Activated CD8-positive, alpha-beta T cell treated with anti-CD3 and anti-CD28 coated beads, Interleukin-2, amount 10 ng/mL, durations not matched to agents 7 days and 5 days (primary cell): ENCODE measurements at regions of chr1 and their contacts with region 1.

Region 1: GRCh38 chr1:53754484-53755312 is 15.7 kb upstream of the GLIS1 start:
- DNase-seq: peak; percentile 54
- ATAC-seq: peak; percentile 63
- H3K4me3 Mint-ChIP-seq: no peak overlapping the region
- H3K27ac Mint-ChIP-seq: no peak overlapping the region
- H3K4me1 Mint-ChIP-seq: no peaks in the 10 kb centered on the region
- H3K27me3 Mint-ChIP-seq: no peaks in the 10 kb centered on the region

Region 2: DNA sequence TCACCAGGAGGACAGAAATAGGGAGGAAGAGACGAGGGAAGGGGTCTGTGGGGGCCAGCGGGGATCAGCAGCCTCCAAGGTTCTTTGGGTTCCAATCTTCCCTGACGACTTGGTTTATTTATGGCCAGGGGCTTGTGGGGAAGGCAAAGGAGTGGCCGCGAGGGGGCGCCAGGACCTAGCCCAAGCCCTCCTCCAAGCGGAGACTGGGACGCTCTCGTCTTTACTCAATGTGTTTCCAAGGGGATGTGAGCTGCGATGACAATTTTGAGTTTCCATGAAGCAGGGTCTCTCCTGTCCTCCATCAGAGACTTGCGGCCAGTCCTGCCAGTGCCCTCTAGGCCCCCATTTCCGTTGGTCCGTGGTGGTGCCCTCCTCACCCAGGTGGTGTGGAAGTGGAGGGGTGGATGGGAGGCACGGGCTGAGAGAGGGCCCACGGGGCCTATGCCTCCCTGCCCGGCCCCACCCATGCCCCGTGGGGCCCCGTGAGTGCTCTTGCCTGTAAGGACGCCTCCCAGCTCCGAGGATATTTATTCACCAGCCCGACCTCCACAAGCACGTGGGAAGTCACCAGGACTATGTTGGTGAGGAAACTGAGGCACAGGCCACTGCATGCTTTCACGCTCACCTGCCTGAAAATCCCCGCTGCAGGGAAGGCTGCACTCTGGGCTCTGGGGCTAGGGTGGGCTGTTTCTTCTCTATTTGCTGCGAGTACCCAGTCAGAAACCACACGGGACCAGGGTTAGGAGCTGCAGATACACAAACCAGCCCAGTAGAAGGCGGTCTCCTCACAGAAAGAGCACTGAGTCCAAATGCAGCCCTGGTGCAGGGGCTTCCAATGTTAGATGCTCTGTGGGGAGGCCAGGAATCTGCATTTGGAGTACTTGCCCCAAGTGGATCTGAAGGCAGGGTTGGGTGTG is 269.0 kb before region 1 on chr1:
- CTCF ChIA-PET with region 1: interaction called, 13 read pairs
- POLR2A ChIA-PET with region 1: no interaction called
- DNase-seq: peak; percentile 79
- ATAC-seq: peak; percentile 83
- H3K4me3 Mint-ChIP-seq: no peak overlapping the region
- H3K27ac Mint-ChIP-seq: no peak overlapping the region
- H3K4me1 Mint-ChIP-seq: no peaks in the 10 kb centered on the region
- H3K27me3 Mint-ChIP-seq: no peaks in the 10 kb centered on the region

Region 3: GRCh38 chr1:53771648-53772047 is 16.9 kb after region 1 on chr1:
- CTCF ChIA-PET with region 1: interaction called, 10 read pairs
- POLR2A ChIA-PET with region 1: no interaction called
- DNase-seq: no peak
- ATAC-seq: no peak
- H3K4me3 Mint-ChIP-seq: no peak overlapping the region
- H3K27ac Mint-ChIP-seq: no peak overlapping the region
- H3K4me1 Mint-ChIP-seq: peaks cover 12% of the 10 kb centered on the region
- H3K27me3 Mint-ChIP-seq: no peaks in the 10 kb centered on the region